Panc1 (cell line): ENCODE measurements at regions of chr19 and their contacts with region 1.

Region 1: GRCh38 chr19:35931161-35931873 is 4.9 kb upstream of the LRFN3 start:
- DNase-seq: peak; percentile 99
- ATAC-seq: peak; percentile 99
- H3K4me3 ChIP-seq: peak overlapping the region; percentile 45 to 59
- H3K27ac ChIP-seq: peak overlapping the region; percentile 92
- H3K4me1 ChIP-seq: peaks cover 11% of the 10 kb centered on the region
- H3K27me3 ChIP-seq: no peaks in the 10 kb centered on the region
- CTCF ChIP-seq: peak; percentile 99

Region 2: GRCh38 chr19:35671818-35672217 is 259.5 kb before region 1 on chr19:
- CTCF ChIA-PET with region 1: no interaction called
- POLR2A ChIA-PET with region 1: interaction called, 10 read pairs
- in situ Hi-C with region 1: no loop called
- intact Hi-C with region 1: no loop called
- DNase-seq: no peak
- ATAC-seq: no peak
- H3K4me3 ChIP-seq: no peak overlapping the region
- H3K27ac ChIP-seq: no peak overlapping the region
- H3K4me1 ChIP-seq: no peaks in the 10 kb centered on the region
- H3K27me3 ChIP-seq: peaks cover 3% of the 10 kb centered on the region; the same call in 1 of the 2 replicates
- CTCF ChIP-seq: no peak

Region 3: DNA sequence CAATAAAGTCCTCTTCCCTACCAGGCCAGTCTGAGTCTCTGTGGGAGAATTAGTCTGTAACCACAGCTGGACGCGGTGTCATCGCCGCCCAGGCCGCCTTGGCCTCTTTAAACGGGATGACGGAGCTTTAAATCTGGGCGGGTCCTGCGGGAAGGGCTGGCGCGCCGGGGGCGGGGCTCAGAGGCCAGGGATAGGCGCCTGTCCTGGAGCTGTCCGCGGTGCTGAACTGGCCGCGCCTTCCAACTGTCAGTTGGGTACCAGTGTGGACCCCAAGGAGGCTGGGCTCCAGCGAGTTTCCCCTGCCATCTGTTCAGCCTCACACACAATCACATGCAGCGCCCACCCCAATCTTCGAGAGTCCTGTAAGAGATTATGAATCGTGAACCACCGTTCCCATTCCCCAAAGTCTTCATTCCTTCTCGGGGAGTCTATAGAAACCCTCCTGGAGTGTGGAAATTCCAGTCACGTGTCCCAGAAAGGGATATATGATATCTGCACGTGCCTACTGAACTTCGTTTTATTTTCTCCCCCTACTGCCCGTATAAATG is 51.5 kb before region 1 on chr19:
- CTCF ChIA-PET with region 1: interaction called, 7 read pairs
- POLR2A ChIA-PET with region 1: interaction called, 3 read pairs
- in situ Hi-C with region 1: no loop called
- intact Hi-C with region 1: loop called (anchors 1 kb)
- DNase-seq: peak; percentile 50
- ATAC-seq: peak; percentile 93
- H3K4me3 ChIP-seq: no peak overlapping the region
- H3K27ac ChIP-seq: no peak overlapping the region
- H3K4me1 ChIP-seq: 0 out of 2 replicates have a peak, but pooled peaks cover 2% of the 10 kb centered on the region
- H3K27me3 ChIP-seq: no peaks in the 10 kb centered on the region
- CTCF ChIP-seq: no peak

Region 4: DNA sequence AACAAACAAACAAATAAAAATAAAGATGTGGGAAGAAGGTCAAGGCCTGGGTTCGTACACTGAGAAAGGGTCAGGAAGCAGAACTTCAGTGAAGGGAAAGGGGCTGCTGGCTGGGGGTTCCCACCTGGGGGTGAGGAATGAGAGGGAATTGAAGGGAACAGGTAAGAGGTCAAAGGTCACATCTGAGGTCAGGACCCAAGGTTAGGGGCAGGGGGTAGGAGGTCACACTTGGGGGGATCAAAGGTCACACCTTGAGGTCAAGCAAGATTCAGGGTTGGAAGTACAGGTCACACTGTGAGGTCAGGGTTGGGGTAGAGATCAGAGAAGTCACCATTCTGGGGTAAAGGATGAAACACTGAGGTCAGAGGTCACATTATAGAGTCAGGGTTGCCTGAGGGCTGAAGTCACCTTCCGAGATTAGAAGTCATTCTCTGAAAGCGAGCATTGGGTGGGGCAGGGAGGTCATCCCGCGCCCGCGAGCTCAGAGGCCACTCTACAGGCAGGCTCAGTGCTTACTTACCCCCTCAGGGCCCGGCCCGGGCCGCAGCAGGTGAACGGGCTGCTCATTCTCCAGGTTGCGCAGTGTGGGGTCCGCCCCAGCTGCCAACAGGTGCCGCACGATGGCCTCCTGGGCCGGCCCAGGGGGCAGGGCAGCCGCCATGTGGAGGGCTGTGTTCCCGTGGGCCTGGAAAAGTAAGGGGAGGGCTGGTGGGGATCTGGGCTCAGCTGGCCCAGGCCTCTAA is 41.8 kb before region 1 on chr19:
- CTCF ChIA-PET with region 1: interaction called, 13 read pairs
- POLR2A ChIA-PET with region 1: interaction called, 5 read pairs
- in situ Hi-C with region 1: no loop called
- intact Hi-C with region 1: no loop called
- DNase-seq: no peak
- ATAC-seq: peak; percentile 31; the same call in 1 of the 2 replicates
- H3K4me3 ChIP-seq: no peak overlapping the region
- H3K27ac ChIP-seq: no peak overlapping the region
- H3K4me1 ChIP-seq: no peaks in the 10 kb centered on the region
- H3K27me3 ChIP-seq: no peaks in the 10 kb centered on the region
- CTCF ChIP-seq: no peak

Region 5: DNA sequence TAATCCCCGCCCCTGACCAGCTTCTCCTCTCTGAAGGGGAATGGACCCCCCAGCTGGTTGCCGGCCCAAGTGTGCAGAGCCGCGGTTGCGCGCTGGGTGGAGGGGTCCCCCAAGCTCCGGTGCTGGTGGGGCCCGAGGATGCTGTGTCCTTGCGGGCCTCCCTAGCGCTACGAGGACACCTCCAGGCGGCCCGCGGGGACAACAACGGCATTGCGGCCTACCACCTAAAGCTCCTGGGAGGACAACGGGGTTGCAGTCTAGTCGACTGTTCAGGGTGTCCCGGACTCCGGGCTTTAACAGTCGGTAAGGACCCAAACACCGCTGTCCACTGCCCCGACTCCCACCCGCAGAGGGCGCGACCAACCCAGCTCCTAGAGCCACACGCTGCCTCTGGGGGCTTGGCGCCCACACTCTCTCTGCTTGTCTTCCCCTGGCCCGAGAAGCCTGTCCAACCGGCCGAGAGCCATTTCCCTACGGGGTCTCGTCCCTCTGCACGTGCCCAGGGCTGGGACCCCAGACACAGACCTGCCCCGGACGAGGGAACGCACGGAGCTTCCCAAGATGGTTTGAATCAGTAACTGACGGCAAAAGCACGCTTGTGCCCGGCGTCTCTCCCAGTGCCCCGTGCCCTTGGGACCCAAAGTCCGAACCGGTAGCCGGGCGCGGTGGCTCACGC is 62.7 kb after region 1 on chr19:
- CTCF ChIA-PET with region 1: interaction called, 16 read pairs
- POLR2A ChIA-PET with region 1: no interaction called
- in situ Hi-C with region 1: no loop called
- intact Hi-C with region 1: no loop called
- DNase-seq: no peak
- ATAC-seq: peak; percentile 32; the same call in 1 of the 2 replicates
- H3K4me3 ChIP-seq: peak overlapping the region; percentile 82 to 93
- H3K27ac ChIP-seq: peak overlapping the region; percentile 87
- H3K4me1 ChIP-seq: peaks cover 14% of the 10 kb centered on the region
- H3K27me3 ChIP-seq: no peaks in the 10 kb centered on the region
- CTCF ChIP-seq: peak; percentile 80

Region 6: GRCh38 chr19:36014029-36014924 is 83.0 kb after region 1 on chr19 and contains the start of gene ALKBH6:
- CTCF ChIA-PET with region 1: no interaction called
- POLR2A ChIA-PET with region 1: interaction called, 10 read pairs
- in situ Hi-C with region 1: no loop called
- intact Hi-C with region 1: no loop called
- DNase-seq: peak; percentile 94
- ATAC-seq: peak; percentile 98
- H3K4me3 ChIP-seq: peak within 1 kb of the TSS; percentile 74 to 97
- H3K27ac ChIP-seq: peak within 1 kb of the TSS; percentile 91
- H3K4me1 ChIP-seq: peaks cover 18% of the 10 kb centered on the region
- H3K27me3 ChIP-seq: no peaks in the 10 kb centered on the region
- CTCF ChIP-seq: no peak
- total RNA-seq, gene ALKBH6: 44.8 TPM